BJ (cell line): ENCODE measurements at regions of chr2 and their contacts with region 1.

Region 1: DNA sequence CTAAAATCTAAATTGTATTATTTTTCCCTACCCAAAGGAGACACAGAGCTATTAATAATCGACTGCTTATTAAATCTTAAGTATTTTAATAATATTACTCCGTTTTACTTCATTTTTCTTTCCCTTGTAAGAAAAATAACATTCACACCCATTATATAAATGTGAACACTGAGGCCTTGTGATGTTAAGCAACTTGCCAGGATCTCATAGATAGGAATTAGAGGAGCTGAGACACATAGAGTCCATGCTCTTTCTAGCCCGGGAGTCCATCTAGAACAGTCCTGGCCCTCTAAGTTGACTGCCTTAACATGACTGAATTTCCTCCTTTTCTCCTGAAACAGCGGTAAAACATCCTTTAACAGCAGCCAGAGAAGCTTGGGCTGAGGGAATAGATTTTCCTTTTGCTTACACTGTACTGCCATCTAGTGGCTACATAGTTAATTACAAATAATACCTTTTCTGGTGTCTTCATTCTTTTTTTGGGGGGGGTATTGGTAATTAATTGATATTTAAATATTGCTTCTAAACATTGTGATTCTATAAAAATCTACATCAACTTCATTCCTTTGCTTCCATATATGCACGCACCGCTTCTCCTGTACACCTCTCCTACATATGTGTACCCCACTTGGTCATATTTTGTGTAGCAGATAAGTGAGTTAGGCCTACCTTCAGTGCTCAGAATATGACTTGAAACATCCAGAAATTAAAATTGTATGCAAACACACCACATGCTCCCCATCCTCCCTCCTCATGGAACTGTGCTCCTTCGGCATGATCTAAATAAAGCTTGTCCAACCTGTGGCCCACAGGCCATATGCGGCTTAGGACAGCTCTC is 125.8 kb upstream of the HNMT start:
- DNase-seq: no peak
- H3K4me3 ChIP-seq: no peak overlapping the region
- H3K27me3 ChIP-seq: no peaks in the 10 kb centered on the region
- CTCF ChIP-seq: peak; percentile 42

Region 2: GRCh38 chr2:136423516-136423996 is 1414.9 kb before region 1 on chr2:
- CTCF ChIA-PET with region 1: interaction called, 29 read pairs
- POLR2A ChIA-PET with region 1: no interaction called
- DNase-seq: no peak
- H3K4me3 ChIP-seq: peak overlapping the region; percentile 50
- H3K27me3 ChIP-seq: no peaks in the 10 kb centered on the region
- CTCF ChIP-seq: peak; percentile 88

Region 3: GRCh38 chr2:136932700-136933099 is 905.8 kb before region 1 on chr2:
- CTCF ChIA-PET with region 1: interaction called, 10 read pairs
- POLR2A ChIA-PET with region 1: no interaction called
- DNase-seq: no peak
- H3K4me3 ChIP-seq: no peak overlapping the region
- H3K27me3 ChIP-seq: no peaks in the 10 kb centered on the region
- CTCF ChIP-seq: peak; percentile 50

Region 4: GRCh38 chr2:137826373-137827372 is 11.8 kb before region 1 on chr2:
- CTCF ChIA-PET with region 1: interaction called, 17 read pairs
- POLR2A ChIA-PET with region 1: no interaction called
- DNase-seq: no peak
- H3K4me3 ChIP-seq: no peak overlapping the region
- H3K27me3 ChIP-seq: no peaks in the 10 kb centered on the region
- CTCF ChIP-seq: no peak